ENCODE measurements at regions of chr6 and their contacts with region 1.

Region 1: GRCh38 chr6:157667211-157668008 is 155.6 kb upstream of the SNX9 start:
- DNase-seq: peak; percentile 46 to 71
- ATAC-seq: peak; percentile 74 to 86; a peak in 4 of 6 replicates
- H3K4me3 ChIP-seq: no peak overlapping the region
- H3K27ac ChIP-seq: no peak overlapping the region
- H3K4me1 ChIP-seq: peaks cover 10% of the 10 kb centered on the region
- CTCF ChIP-seq: peak; percentile 66
- EP300 ChIP-seq: no peak
- POLR2A ChIP-seq: no peak
- RAD21 ChIP-seq: peak; percentile 66 to 76

Region 2: GRCh38 chr6:157314705-157315321 is 352.6 kb before region 1 on chr6:
- CTCF ChIA-PET with region 1: interaction called, 36 read pairs
- POLR2A ChIA-PET with region 1: no interaction called
- DNase-seq: peak; percentile 40 to 60
- ATAC-seq: peak in 1 of 2 experiments; percentile 86; a peak in 3 of 6 replicates
- H3K4me3 ChIP-seq: no peak overlapping the region
- H3K27ac ChIP-seq: no peak overlapping the region
- H3K4me1 ChIP-seq: peaks cover 17% of the 10 kb centered on the region
- CTCF ChIP-seq: peak; percentile 94
- EP300 ChIP-seq: no peak
- POLR2A ChIP-seq: no peak
- RAD21 ChIP-seq: peak; percentile 78 to 82

Region 3: GRCh38 chr6:157650261-157650640 is 17.2 kb before region 1 on chr6:
- CTCF ChIA-PET with region 1: interaction called, 15 read pairs
- POLR2A ChIA-PET with region 1: no interaction called
- DNase-seq: no peak
- ATAC-seq: no peak
- H3K4me3 ChIP-seq: no peak overlapping the region
- H3K27ac ChIP-seq: no peak overlapping the region
- H3K4me1 ChIP-seq: 0 out of 3 replicates have a peak, but pooled peaks cover 4% of the 10 kb centered on the region
- CTCF ChIP-seq: no peak
- EP300 ChIP-seq: no peak
- POLR2A ChIP-seq: no peak
- RAD21 ChIP-seq: no peak

Region 4: DNA sequence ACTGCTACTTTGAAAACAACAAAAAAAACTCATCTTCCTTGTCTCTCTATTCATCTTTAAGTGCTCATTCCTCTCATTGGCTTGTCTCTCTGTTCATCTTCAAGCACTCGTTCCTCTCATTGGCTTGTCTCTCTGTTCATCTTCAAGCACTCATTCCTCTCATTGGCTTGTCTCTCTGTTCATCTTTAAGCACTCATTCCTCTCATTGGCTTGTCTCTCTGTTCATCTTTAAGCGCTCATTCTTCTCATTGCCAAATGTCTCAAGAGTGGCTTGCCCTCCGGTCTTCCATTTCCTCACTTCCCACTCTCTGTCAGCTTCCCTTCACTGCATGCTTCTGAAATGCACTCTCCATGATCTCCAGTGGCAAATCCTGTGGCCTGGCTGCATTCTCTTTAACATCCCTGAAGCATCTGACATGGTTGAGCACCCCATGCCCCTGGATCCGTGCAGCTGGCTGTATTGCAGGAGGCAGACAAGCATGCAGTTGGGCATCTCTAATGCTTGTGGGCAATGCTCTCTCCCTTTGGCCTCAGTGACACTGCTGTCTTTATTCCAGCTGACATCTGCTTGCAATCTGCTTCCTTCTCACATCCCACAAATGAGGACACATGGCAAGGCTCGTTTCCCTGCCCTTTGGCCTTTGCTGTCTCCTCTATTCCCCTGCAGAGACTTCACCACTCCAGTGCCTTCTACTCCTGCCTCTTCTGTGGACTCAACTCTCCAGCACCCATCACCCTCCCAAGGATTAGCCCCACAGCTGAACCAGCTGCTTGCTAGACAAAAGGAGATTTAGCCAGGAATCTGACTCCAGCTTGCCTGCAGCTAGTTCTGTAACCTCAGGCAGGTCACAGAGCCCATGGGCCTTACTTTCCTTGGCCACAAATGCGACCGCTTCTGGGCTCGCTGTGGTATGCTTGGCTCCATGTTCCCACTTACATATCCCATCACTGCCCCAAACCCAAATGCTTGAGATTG is 12.5 kb after region 1 on chr6:
- CTCF ChIA-PET with region 1: interaction called, 48 read pairs
- POLR2A ChIA-PET with region 1: no interaction called
- DNase-seq: peak in 1 of 2 experiments; percentile 28
- ATAC-seq: no peak
- H3K4me3 ChIP-seq: no peak overlapping the region
- H3K27ac ChIP-seq: no peak overlapping the region
- H3K4me1 ChIP-seq: peaks cover 10% of the 10 kb centered on the region
- CTCF ChIP-seq: no peak
- EP300 ChIP-seq: no peak
- POLR2A ChIP-seq: no peak
- RAD21 ChIP-seq: no peak

Region 5: DNA sequence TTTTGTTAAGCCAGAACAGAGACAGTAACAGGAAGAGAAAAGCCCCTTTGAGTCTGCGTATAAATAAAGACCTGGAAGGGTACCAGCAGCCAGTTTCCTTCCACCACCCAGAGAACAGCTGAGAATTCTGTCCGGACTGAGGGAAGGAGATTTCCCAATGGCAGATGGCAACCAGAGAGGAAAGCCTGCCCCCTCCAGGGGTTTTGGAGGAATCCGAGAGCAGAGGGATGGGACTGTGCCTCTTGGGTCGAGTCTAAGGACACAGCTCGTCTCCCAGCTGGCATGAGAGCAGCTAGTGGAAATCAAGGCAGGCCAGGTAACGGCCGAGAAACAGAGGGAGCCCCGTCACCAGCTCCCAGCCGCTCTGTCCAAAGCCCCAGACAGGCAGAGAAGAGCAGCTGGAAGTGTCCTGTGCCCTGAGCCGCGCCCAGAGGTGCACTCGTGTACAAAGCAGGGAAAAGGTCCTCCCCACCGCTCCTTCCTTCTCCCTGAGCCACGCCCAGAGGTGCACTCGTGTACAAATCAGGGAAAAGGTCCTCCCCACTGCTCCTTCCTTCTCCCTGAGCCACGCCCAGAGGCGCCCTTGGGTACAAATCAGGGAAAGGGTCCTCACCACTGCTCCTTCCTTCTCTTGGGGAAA is 21.7 kb after region 1 on chr6:
- CTCF ChIA-PET with region 1: interaction called, 13 read pairs
- POLR2A ChIA-PET with region 1: no interaction called
- DNase-seq: peak; percentile 18 to 29
- ATAC-seq: peak; percentile 74 to 85
- H3K4me3 ChIP-seq: no peak overlapping the region
- H3K27ac ChIP-seq: no peak overlapping the region
- H3K4me1 ChIP-seq: no peaks in the 10 kb centered on the region
- CTCF ChIP-seq: no peak
- EP300 ChIP-seq: no peak
- POLR2A ChIP-seq: no peak
- RAD21 ChIP-seq: peak in 1 of 2 experiments; percentile 17; a peak in 1 of 5 replicates